ENCODE measurements at regions of chr3 and their contacts with region 1.

Region 1: DNA sequence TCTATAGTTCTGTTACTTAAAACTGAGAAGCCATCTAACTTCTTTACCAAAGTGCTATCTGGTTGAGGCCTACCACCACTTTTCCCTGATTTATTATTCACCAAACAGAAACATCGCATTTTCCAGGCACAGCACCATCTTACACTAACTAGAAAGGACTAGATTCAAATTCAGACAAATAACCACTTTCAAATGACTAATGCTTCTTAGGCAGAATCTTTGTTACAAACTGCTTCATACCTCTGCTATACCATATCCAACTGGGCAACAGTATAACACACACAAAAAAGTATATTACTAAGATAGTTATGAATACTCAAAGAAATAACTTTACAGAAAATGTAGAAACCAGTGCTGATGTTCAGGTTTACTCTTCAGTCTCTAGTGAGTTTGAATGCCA is 16.6 kb downstream of the DLG1 start:
- DNase-seq: no peak
- H3K4me3 ChIP-seq: no peak overlapping the region
- H3K27me3 ChIP-seq: no peaks in the 10 kb centered on the region
- CTCF ChIP-seq: no peak

Region 2: DNA sequence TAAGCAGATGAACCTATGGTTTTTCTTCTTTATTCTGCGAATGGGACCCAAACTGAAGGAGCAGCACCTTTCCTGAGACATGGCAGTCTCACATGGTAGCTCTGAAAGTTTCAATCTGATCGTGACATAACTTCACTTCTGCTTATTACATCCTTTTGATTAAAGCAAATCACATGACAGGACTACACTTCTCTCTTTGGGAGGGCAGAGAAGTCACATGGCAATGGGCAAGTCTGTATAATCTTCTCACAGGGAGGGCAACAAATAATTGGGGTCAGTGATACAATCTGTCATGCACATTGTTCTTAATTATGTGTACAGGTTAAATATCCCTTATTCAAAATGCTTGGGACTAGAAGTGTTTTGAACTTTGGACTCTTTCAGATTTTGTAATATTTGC is 361.1 kb before region 1 on chr3:
- CTCF ChIA-PET with region 1: no interaction called
- POLR2A ChIA-PET with region 1: no interaction called
- DNase-seq: no peak
- H3K4me3 ChIP-seq: no peak overlapping the region
- H3K27me3 ChIP-seq: no peaks in the 10 kb centered on the region
- CTCF ChIP-seq: no peak

Region 3: DNA sequence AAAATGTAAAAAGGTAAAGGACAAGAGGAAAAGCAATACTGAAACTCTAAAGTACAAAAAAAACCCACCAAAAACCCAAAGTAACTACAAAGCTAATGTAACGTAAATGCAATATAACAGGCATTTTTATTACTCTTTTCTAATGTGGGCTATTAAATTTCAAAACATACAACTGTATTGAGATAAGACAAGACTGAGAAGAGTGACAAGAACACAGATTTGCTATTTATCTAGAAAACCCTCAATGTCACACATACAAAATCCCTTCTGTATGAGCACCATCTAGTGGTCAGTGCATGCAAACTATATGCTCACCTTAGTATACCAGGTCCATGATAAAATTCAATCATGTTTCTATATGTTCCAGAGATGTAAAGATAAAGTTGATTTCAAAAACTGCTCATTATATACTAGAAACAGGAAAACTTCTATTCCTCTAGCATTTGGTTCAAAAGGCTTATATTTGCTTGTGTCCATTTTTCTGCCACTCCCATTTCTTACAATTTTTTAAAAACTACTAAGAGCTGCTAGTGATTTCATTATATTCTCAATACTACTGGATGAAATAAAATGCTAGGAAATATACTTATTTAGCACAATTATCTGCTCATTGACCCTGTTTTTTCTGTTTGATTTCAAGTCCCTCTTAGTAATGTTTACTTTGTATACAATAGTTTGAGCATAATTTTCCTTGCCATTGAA is 94.8 kb before region 1 on chr3:
- CTCF ChIA-PET with region 1: no interaction called
- POLR2A ChIA-PET with region 1: no interaction called
- DNase-seq: peak; percentile 4
- H3K4me3 ChIP-seq: no peak overlapping the region
- H3K27me3 ChIP-seq: no peaks in the 10 kb centered on the region
- CTCF ChIP-seq: peak; percentile 74

Region 4: GRCh38 chr3:197298341-197298857 is 16.6 kb after region 1 on chr3 and contains the start of gene DLG1:
- CTCF ChIA-PET with region 1: interaction called, 4 read pairs
- POLR2A ChIA-PET with region 1: interaction called, 10 read pairs
- DNase-seq: peak; percentile 53
- H3K4me3 ChIP-seq: peak within 1 kb of the TSS; percentile 81
- H3K27me3 ChIP-seq: no peaks in the 10 kb centered on the region
- CTCF ChIP-seq: no peak
- polyA plus RNA-seq, gene DLG1: 40.4 and 79.8 TPM in 2 replicates

Measured in BJ (cell line).